ENCODE measurements at regions of chr10 and their contacts with region 1.

Region 1: GRCh38 chr10:116143333-116144222 is 129.4 kb downstream of the GFRA1 start:
- DNase-seq: no peak
- ATAC-seq: peak in 3 of 4 donors; percentile 32 to 53 (median 51)
- H3K4me3 ChIP-seq: no peak overlapping the region
- H3K27ac ChIP-seq: no peak overlapping the region
- H3K4me1 ChIP-seq: peaks cover 0 to 7% (median 0%) of the 10 kb centered on the region in 12 donors
- H3K27me3 ChIP-seq: no peaks in the 10 kb centered on the region
- CTCF ChIP-seq: no peak
- POLR2A ChIP-seq: no peak

Region 2: GRCh38 chr10:116097239-116097784 is 46.3 kb before region 1 on chr10:
- intact Hi-C with region 1: no loop called
- DNase-seq: no peak
- ATAC-seq: no peak
- H3K4me3 ChIP-seq: no peak overlapping the region
- H3K27ac ChIP-seq: no peak overlapping the region
- H3K4me1 ChIP-seq: no peaks in the 10 kb centered on the region
- H3K27me3 ChIP-seq: peaks cover 0 to 10% (median 0%) of the 10 kb centered on the region in 9 donors
- CTCF ChIP-seq: no peak
- POLR2A ChIP-seq: no peak

Region 3: DNA sequence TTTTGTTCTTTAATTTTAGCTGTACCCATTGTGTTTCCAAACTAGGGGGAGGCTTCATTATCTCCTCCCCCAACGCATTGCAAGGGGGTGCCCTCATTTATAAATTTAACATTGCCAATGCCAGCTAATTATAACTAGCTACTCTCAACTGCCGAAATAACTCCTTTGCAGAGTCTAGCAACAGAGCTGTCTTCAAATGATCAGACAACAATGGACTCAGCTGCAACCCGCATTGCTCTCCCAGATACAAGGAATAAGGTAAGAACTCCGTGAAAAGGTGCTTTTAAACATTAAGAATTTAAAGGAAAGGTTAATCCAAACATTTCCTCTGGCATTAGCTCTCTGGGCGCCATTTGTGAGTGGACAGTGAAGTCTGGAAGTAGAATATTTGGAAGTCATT is 13.2 kb after region 1 on chr10:
- intact Hi-C with region 1: loop called in 1 of 10 experiments (anchors 2 kb)
- DNase-seq: no peak
- ATAC-seq: no peak
- H3K4me3 ChIP-seq: no peak overlapping the region
- H3K27ac ChIP-seq: no peak overlapping the region
- H3K4me1 ChIP-seq: no peaks in the 10 kb centered on the region
- H3K27me3 ChIP-seq: no peaks in the 10 kb centered on the region
- CTCF ChIP-seq: no peak
- POLR2A ChIP-seq: no peak